ENCODE measurements at regions of chr9 and their contacts with region 1.

Region 1: DNA sequence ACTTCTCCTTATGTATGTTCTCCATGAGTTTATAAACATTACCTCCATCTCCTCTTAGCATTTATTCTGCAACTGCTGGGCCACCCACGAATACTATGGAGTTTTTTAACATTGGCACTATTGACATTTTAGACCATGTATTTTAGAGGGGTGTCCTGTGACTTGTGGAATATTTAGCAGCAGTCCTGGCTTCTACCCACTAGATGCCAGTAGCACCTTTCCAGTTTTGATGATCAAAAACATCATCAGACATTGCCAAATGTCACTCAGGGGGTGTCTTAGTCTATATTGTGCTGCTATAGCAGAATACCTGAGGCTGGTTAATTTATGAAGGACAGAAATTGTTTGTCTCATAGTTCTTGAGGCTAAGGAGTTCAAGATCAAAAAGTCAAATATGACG is 187.5 kb upstream of the RORB start:
- DNase-seq: no peak
- ATAC-seq: no peak
- H3K4me3 Mint-ChIP-seq: no peak overlapping the region
- H3K27ac Mint-ChIP-seq: no peak overlapping the region
- H3K4me1 Mint-ChIP-seq: no peaks in the 10 kb centered on the region
- H3K27me3 Mint-ChIP-seq: peaks cover 6% of the 10 kb centered on the region

Region 2: GRCh38 chr9:74245866-74246497 is 63.7 kb before region 1 on chr9:
- CTCF ChIA-PET with region 1: no interaction called
- POLR2A ChIA-PET with region 1: no interaction called
- DNase-seq: peak; percentile 47
- ATAC-seq: peak; percentile 97
- H3K4me3 Mint-ChIP-seq: peak overlapping the region; percentile 48
- H3K27ac Mint-ChIP-seq: peak overlapping the region; percentile 95
- H3K4me1 Mint-ChIP-seq: peaks cover 30% of the 10 kb centered on the region
- H3K27me3 Mint-ChIP-seq: no peaks in the 10 kb centered on the region

Region 3: GRCh38 chr9:74379718-74380117 is 70.1 kb after region 1 on chr9:
- CTCF ChIA-PET with region 1: interaction called, 21 read pairs
- POLR2A ChIA-PET with region 1: no interaction called
- DNase-seq: peak; percentile 43
- ATAC-seq: peak; percentile 64
- H3K4me3 Mint-ChIP-seq: no peak overlapping the region
- H3K27ac Mint-ChIP-seq: no peak overlapping the region
- H3K4me1 Mint-ChIP-seq: peaks cover 10% of the 10 kb centered on the region
- H3K27me3 Mint-ChIP-seq: peaks cover 2% of the 10 kb centered on the region